ENCODE measurements at regions of chr3 and their contacts with region 1.

Region 1: GRCh38 chr3:195154793-195155535 is 116.0 kb downstream of the XXYLT1 start:
- DNase-seq: peak; percentile 92

Region 2: DNA sequence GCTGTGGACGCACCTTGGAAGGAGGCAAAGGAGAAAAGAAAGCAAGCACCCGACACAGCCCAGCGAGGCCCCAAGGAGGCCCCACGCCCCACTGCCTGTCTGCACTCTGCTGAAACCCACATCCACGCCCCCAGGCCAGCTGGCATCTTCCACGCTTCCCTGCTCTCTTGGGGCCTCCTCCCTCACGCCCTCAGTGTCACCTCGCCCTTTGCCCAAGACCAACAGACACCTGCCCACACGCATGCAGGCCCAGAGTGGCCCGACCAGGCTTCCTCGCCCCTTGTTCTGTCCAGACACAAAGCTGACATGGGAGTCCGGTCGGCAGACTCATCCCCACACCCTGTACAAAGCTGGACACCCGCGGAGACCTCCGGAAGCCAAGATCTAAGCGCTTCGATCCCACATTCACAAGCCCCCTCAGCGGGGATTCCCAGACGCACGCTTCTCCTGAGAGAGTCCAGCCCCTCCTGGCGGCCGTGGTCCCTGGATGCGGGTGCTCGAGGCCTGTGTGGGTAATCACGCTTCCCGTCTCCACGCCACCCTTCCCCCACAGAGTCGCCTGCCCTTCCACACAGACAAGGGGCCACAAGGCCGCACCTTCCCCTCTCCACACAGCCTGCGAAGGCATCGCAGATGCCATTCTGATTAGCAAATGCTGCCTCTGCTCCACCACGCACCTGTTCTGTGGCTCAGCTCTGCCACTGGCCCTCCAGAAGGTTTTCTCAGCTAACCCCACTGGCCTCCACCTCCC is 60.6 kb before region 1 on chr3:
- intact Hi-C with region 1: no loop called
- DNase-seq: peak; percentile 64

Region 3: DNA sequence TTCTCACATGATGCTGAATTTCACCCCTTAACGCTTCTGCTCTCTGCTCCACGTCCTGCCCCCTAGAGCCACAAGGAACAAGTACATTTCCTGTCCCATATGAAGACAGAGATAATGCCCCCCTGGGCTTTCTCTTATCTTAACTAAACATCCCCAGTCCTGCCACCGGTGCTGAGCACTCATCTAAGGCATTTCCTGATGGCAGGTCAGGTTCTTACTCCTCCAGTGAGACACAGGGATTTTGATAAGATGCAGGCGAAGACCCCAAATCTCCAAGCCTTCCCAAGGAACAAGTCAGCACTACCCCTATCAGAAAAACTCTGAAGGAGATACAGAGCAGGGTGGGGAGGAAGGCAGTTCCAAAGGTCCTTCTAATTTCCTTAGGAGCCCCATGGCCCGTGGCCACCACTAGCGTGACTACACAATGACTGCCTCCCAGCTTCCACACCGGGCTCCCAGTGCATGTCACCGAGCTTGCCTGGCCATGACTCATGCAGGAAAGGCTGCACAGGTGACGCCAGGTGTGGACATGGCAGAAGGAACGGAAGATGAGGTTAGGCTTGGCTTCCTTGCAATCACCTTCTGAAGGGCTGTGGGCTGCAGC is 36.9 kb before region 1 on chr3:
- intact Hi-C with region 1: loop called (anchors 5 kb)
- DNase-seq: no peak

Region 4: DNA sequence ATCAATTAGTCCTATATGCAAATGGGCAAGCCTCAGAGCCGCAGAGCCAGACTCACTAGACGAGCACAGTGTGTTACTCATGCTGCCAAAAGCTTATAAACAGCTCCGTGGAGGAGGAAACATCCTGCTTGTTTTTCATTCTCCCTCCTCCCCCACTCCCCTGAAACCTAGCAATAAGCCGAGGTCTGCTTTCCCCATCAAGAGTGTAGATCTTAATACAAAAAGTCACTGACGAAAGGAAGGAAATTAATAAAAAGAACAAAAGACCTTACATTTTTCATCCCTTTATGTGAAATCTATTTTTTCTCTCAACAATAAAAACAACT is 27.5 kb after region 1 on chr3:
- intact Hi-C with region 1: loop called (anchors 2 kb)
- DNase-seq: no peak